Colonic mucosa (tissue), 4 donors: ENCODE measurements at regions of chr2 and their contacts with region 1.

Region 1: GRCh38 chr2:219530048-219530963 is 13.3 kb downstream of the CHPF start:
- DNase-seq: peak; percentile 82
- H3K4me3 ChIP-seq: no peak overlapping the region
- H3K27ac ChIP-seq: no peak overlapping the region
- H3K4me1 ChIP-seq: no peaks in the 10 kb centered on the region
- H3K27me3 ChIP-seq: peaks cover 16% of the 10 kb centered on the region
- CTCF ChIP-seq: peak; percentile 92

Region 2: DNA sequence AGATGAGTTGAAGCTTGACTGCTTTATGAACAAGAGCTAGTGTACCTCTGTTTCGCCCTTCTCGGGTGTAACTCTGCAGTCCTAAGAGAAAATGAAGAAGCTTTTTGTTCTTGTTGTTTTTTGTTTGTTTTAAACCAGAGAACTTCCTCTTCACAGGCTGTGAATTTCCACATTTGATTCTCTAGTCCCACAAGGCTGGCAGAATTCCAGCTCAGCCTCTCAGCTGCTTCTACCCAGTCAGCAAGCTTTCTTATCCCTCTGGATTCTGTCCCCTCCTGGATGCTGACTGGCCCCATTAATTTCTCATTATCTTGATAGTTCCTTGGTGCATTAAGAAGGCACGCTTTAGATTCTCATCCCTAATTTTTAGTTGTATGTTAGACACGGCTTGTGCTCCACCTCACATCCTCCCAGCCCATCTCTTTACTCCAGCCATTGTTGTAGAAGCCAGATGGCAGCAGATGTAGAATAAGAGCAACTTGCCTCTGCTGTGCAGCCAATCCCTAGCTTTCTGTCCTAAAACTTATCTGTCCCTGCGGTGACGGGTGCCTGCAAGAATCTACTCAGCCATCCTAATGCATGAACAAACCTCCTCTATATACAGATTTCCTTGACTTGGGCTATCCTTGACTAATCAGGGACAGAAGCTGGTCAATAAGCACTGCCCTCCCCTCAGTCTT is 185.4 kb before region 1 on chr2:
- intact Hi-C with region 1: no loop called
- DNase-seq: peak; percentile 28
- H3K4me3 ChIP-seq: no peak overlapping the region
- H3K27ac ChIP-seq: no peak overlapping the region
- H3K4me1 ChIP-seq: no peaks in the 10 kb centered on the region
- H3K27me3 ChIP-seq: no peaks in the 10 kb centered on the region
- CTCF ChIP-seq: no peak

Region 3: DNA sequence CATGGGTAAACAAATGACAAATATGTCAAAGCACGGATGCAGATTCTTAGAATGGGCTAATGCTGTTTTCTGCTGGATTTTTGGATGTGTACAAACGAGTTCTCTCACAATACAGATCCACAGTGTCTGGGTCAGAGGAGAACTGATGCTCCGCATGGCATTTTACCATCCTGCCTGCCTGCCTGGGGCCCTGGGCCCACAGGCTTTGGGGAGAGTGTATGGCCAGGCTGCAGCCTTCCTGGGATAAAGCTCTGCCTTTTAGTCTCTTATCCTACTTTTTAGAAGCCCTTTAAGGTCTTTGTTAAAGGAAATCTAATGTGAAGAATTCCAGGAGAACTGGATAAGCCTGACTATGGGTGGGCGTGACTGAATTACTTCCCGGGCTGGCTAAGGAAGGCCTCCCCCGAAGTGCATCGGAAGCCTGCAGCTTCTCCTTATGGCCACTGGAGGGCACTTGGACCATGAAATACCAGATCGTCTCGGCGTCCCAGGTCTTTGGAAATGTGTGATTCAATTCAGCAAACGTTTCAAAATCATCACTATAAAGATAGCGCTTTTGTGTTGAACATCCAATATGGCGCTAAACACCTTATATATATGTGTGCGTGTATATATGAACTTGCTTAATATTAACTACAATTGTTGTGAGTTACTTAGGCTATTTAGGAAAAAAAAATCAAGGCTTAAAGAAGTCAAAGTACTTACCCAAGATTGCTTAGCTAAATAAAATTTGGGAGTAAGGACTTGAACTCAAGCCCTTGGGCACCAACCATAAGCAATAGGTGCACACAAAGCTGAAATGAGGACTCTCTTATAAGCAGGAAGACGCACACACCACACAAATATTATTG is 127.4 kb before region 1 on chr2:
- intact Hi-C with region 1: loop called (anchors 2 kb)
- DNase-seq: peak; percentile 65
- H3K4me3 ChIP-seq: no peak overlapping the region
- H3K27ac ChIP-seq: no peak overlapping the region
- H3K4me1 ChIP-seq: peaks cover 11% of the 10 kb centered on the region
- H3K27me3 ChIP-seq: no peaks in the 10 kb centered on the region
- CTCF ChIP-seq: peak; percentile 89

Region 4: DNA sequence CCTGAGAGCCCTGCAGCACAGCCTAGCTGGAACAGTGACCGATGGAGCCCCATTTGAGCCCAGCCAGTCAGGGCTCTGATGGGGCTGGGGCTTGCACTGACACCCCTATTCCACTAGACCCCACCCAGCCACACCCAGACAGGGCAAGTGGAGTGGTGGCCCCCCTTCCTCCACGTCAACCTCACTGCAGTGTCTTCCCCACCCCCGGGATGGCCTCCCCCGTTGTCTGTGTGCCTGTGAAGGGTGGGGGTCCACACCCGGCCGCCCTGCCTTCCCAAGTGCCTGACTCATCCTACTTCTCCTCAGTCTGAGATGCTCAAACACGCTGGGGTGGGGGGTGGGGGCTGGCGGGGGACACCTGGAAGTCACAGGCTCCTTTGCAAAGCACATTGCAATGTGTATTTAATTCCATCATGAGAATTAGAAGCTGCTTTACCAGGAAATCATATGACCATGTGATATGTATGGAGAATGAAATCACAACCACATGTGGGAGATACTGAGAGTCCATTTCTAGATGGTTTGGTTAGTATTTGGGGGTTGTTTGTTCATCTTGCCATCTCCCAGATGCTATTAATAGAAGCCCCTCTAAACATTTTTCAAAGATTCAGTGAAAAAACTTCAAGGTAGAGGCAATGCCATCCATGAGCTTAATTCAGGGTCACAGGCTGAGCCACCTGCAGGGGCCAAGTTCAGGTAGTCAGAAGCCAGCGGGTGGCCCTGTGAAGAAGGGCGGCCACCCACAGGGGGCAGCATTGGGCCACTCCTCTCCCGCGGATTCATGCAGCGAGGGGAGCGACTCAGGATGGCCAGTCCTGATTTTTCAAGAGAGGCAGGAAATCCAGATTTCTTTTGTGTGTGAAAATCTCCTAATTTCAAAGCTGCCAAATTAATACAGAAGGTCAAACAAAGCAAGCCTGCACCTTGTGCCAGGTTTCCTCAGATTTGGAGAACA is 54.3 kb before region 1 on chr2:
- intact Hi-C with region 1: loop called (anchors 2 kb)
- DNase-seq: peak; percentile 77
- H3K4me3 ChIP-seq: no peak overlapping the region
- H3K27ac ChIP-seq: no peak overlapping the region
- H3K4me1 ChIP-seq: no peaks in the 10 kb centered on the region
- H3K27me3 ChIP-seq: no peaks in the 10 kb centered on the region
- CTCF ChIP-seq: peak; percentile 76

Region 5: DNA sequence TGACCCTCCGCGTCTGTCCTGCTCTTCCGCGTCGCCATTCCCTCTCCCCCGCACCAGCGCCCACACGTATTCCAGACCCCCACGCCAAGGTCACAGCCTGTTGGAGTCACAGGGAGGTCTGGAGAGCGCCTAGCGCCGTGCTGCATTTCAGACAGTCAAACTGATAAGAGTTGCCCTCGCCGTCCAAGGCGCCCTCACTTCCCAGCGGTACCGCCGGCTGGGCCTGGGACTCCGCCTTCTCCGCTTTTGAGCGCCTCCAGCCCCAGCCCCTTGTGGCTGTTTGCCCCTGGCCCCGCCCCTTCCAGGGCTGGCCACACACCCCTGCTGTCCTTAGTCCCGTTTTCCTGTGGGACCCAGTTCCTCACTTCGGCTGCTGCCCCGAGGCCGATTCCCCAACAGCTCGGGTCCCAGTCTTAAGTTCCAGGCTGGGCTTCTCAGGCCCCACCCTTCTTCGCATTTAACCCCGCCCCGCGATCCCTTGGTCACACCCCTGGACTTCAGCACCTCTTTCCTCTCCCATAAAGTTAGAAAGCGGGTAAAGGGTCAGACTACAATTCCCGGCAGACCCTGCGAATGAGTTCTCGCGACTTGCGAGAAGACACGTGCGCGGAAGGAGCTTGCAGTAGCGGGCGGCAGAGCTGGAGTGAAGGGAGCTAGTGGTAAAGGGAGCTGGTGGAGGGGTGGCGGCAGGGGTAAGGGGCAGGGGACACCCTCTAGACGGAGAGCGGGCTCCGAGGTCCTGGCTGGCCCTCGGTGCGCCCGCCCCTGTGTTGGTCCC is 31.8 kb before region 1 on chr2 and contains the start of gene GMPPA:
- intact Hi-C with region 1: loop called (anchors 5 kb)
- DNase-seq: peak; percentile 99
- H3K4me3 ChIP-seq: peak within 1 kb of the TSS; percentile 60
- H3K27ac ChIP-seq: peak within 1 kb of the TSS; percentile 98
- H3K4me1 ChIP-seq: no peaks in the 10 kb centered on the region
- H3K27me3 ChIP-seq: peaks cover 24% of the 10 kb centered on the region
- CTCF ChIP-seq: no peak
- total RNA-seq, gene GMPPA: 49.7 to 86.1 TPM